Activated CD4-positive, alpha-beta T cell treated with anti-CD3 and anti-CD28 coated beads for 36 hours (primary cell): ENCODE measurements at regions of chr12 and their contacts with region 1.

Region 1: DNA sequence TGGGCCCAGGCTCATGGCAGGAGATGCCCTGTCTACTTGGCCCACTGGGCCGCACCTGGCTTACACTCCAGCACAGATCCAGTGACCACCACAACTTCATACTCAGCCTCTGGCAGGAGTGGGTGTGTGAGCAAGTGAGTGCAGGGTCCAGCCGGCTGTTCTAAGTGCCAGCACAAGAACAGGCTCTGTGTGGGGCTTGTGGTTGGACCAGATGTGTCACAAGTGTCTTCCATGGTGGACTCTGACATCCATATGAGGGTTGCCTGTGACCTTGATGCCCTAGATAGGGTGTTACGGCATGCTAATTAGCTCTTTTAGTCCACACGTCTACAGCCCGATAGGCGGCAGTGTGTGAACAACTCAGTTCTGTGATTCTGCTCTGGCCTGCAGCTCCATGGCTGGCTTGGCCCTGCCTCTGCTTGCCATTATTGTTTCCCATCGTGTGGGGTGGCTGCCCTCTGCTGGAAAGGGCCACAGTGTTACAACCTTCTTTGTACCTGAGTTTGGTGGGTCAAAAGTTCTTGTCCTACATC is 1089.1 kb downstream of the SLC6A15 start:
- DNase-seq: peak; percentile 66
- ATAC-seq: peak; percentile 84
- H3K4me3 Mint-ChIP-seq: no peak overlapping the region
- H3K27ac Mint-ChIP-seq: no peak overlapping the region
- H3K4me1 Mint-ChIP-seq: no peaks in the 10 kb centered on the region
- H3K27me3 Mint-ChIP-seq: no peaks in the 10 kb centered on the region

Region 2: GRCh38 chr12:82527165-82527780 is 1296.2 kb before region 1 on chr12:
- CTCF ChIA-PET with region 1: no interaction called
- POLR2A ChIA-PET with region 1: no interaction called
- intact Hi-C with region 1: loop called (anchors 1 to 2 kb)
- DNase-seq: peak; percentile 45
- ATAC-seq: peak; percentile 47
- H3K4me3 Mint-ChIP-seq: no peak overlapping the region
- H3K27ac Mint-ChIP-seq: no peak overlapping the region
- H3K4me1 Mint-ChIP-seq: no peaks in the 10 kb centered on the region
- H3K27me3 Mint-ChIP-seq: peaks cover 5% of the 10 kb centered on the region

Region 3: DNA sequence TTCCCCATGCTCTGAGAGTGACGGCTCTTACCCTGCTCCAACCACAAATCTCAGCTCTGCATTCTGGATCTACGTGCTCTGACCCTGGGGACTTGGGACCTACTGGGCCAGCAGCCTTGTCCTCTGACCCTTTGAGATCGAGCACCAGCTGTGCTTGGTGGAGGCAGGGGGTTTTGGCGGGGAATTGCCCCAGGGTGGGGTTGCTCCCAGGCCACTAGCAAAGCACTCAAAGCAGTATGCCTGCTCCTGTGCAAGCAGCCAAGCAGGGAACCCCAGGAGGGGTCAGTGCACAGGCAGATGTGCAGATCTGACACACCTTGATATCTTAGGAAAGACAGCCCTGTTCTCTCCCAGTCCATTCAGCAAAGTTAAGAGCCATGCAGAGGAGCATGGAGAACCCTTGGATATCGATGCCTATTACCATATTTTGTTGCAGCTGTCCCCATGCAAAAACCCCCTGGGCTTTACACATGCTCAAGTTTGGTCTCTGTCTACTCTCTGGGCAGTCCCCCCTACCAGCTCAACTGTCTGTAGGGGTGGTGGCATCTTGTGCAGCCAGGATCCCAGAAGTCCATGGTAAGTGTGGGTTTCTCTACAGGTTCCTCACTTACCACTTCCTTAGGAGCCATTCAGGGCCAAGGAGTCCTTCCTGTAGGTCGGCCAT is 817.8 kb before region 1 on chr12:
- CTCF ChIA-PET with region 1: no interaction called
- POLR2A ChIA-PET with region 1: no interaction called
- intact Hi-C with region 1: loop called (anchors 2 to 10 kb)
- DNase-seq: no peak
- ATAC-seq: no peak
- H3K4me3 Mint-ChIP-seq: no peak overlapping the region
- H3K27ac Mint-ChIP-seq: no peak overlapping the region
- H3K4me1 Mint-ChIP-seq: no peaks in the 10 kb centered on the region
- H3K27me3 Mint-ChIP-seq: no peaks in the 10 kb centered on the region

Region 4: GRCh38 chr12:84502907-84503787 is 679.6 kb after region 1 on chr12:
- CTCF ChIA-PET with region 1: interaction called, 5 read pairs
- POLR2A ChIA-PET with region 1: no interaction called
- intact Hi-C with region 1: loop called in 1 of 2 experiments (anchors 2 kb)
- DNase-seq: peak; percentile 51
- ATAC-seq: peak; percentile 55
- H3K4me3 Mint-ChIP-seq: no peak overlapping the region
- H3K27ac Mint-ChIP-seq: no peak overlapping the region
- H3K4me1 Mint-ChIP-seq: no peaks in the 10 kb centered on the region
- H3K27me3 Mint-ChIP-seq: no peaks in the 10 kb centered on the region

Region 5: GRCh38 chr12:84840356-84840755 is 1016.9 kb after region 1 on chr12:
- CTCF ChIA-PET with region 1: no interaction called
- POLR2A ChIA-PET with region 1: no interaction called
- intact Hi-C with region 1: loop called in 1 of 2 experiments (anchors 2 kb)
- DNase-seq: no peak
- ATAC-seq: no peak
- H3K4me3 Mint-ChIP-seq: no peak overlapping the region
- H3K27ac Mint-ChIP-seq: no peak overlapping the region
- H3K4me1 Mint-ChIP-seq: peaks cover 13% of the 10 kb centered on the region
- H3K27me3 Mint-ChIP-seq: no peaks in the 10 kb centered on the region